MCF 10A (cell line): ENCODE measurements at regions of chr7 and their contacts with region 1.

Region 1: DNA sequence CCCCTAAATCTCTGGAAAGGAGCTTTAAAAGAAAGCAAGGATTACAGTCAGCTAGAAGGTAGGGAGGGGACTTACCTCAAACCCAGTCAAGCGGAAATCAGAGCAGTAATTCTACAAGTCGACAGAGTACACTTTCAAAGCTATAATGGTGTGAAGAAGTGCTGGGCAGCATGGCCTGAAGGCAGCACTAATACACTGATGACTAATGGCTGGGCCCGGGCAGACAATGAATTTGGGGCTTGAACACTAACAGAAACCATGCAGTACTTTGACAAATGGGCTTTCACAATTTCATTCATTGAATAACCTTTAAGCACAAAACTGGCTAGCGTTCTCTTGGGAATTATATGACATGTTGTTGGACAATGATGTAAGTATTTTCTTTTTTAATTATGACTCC is 4.7 kb downstream of the GLI3 start:
- DNase-seq: peak; percentile 95
- H3K4me3 Mint-ChIP-seq: peak overlapping the region; percentile 41
- H3K27ac Mint-ChIP-seq: peak overlapping the region; percentile 49
- H3K4me1 Mint-ChIP-seq: peaks cover 39% of the 10 kb centered on the region
- H3K27me3 Mint-ChIP-seq: no peaks in the 10 kb centered on the region
- CTCF ChIP-seq: no peak

Region 2: DNA sequence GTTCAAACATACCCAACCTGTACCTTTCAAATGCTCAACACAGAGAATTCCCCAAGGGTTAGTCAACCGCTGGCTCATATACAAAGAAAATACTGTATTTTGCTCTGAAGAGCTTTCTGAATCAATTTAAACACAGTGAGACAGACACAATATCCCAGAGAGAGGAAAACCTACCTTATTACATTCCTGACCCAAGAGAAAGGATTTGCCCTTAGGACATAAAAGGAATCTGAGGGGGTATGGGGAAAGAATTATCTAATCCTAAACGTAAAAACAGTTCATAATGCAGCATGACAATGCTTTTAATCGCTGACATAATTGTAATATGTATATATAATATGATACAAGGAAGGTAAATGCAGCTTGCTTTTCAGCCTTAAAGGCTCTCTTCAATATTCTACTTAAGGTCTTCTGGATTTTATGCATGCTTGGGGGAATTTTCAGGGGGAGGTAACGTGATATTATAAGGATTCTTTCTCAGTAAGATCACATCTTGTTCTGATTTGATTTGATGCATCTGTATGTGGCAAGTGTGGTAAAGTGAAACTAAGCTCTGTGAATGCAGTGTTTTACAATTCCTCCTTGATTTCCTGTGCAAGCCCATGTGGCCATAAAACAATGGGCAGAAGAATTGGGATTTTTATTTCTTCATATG is 235.8 kb before region 1 on chr7:
- CTCF ChIA-PET with region 1: interaction called, 4 read pairs
- POLR2A ChIA-PET with region 1: interaction called, 13 read pairs
- intact Hi-C with region 1: no loop called
- DNase-seq: peak; percentile 74
- H3K4me3 Mint-ChIP-seq: peak overlapping the region; percentile 60
- H3K27ac Mint-ChIP-seq: peak overlapping the region; percentile 74
- H3K4me1 Mint-ChIP-seq: peaks cover 48% of the 10 kb centered on the region
- H3K27me3 Mint-ChIP-seq: no peaks in the 10 kb centered on the region
- CTCF ChIP-seq: no peak

Region 3: GRCh38 chr7:42192851-42193461 is 39.3 kb before region 1 on chr7:
- CTCF ChIA-PET with region 1: interaction called, 3 read pairs
- POLR2A ChIA-PET with region 1: interaction called, 71 read pairs
- intact Hi-C with region 1: loop called (anchors 2 kb)
- DNase-seq: peak; percentile 53
- H3K4me3 Mint-ChIP-seq: peak overlapping the region; percentile 57
- H3K27ac Mint-ChIP-seq: peak overlapping the region; percentile 85
- H3K4me1 Mint-ChIP-seq: peaks cover 66% of the 10 kb centered on the region
- H3K27me3 Mint-ChIP-seq: no peaks in the 10 kb centered on the region
- CTCF ChIP-seq: no peak

Region 4: GRCh38 chr7:42198974-42199668 is 33.2 kb before region 1 on chr7:
- CTCF ChIA-PET with region 1: interaction called, 3 read pairs
- POLR2A ChIA-PET with region 1: interaction called, 71 read pairs
- intact Hi-C with region 1: no loop called
- DNase-seq: no peak
- H3K4me3 Mint-ChIP-seq: no peak overlapping the region
- H3K27ac Mint-ChIP-seq: peak overlapping the region; percentile 81
- H3K4me1 Mint-ChIP-seq: peaks cover 38% of the 10 kb centered on the region
- H3K27me3 Mint-ChIP-seq: no peaks in the 10 kb centered on the region
- CTCF ChIP-seq: no peak

Region 5: GRCh38 chr7:42671627-42672026 is 439.4 kb after region 1 on chr7:
- CTCF ChIA-PET with region 1: no interaction called
- POLR2A ChIA-PET with region 1: interaction called, 10 read pairs
- intact Hi-C with region 1: no loop called
- DNase-seq: peak; percentile 95
- H3K4me3 Mint-ChIP-seq: no peak overlapping the region
- H3K27ac Mint-ChIP-seq: peak overlapping the region; percentile 89
- H3K4me1 Mint-ChIP-seq: peaks cover 42% of the 10 kb centered on the region
- H3K27me3 Mint-ChIP-seq: no peaks in the 10 kb centered on the region
- CTCF ChIP-seq: no peak

Region 6: GRCh38 chr7:42677751-42678699 is 445.8 kb after region 1 on chr7:
- CTCF ChIA-PET with region 1: no interaction called
- POLR2A ChIA-PET with region 1: interaction called, 16 read pairs
- intact Hi-C with region 1: no loop called
- DNase-seq: peak; percentile 91
- H3K4me3 Mint-ChIP-seq: peak overlapping the region; percentile 17
- H3K27ac Mint-ChIP-seq: peak overlapping the region; percentile 86
- H3K4me1 Mint-ChIP-seq: peaks cover 36% of the 10 kb centered on the region
- H3K27me3 Mint-ChIP-seq: no peaks in the 10 kb centered on the region
- CTCF ChIP-seq: no peak

Region 7: GRCh38 chr7:42690794-42691639 is 458.7 kb after region 1 on chr7:
- CTCF ChIA-PET with region 1: interaction called, 3 read pairs
- POLR2A ChIA-PET with region 1: interaction called, 10 read pairs
- intact Hi-C with region 1: loop called (anchors 5 kb)
- DNase-seq: peak; percentile 76
- H3K4me3 Mint-ChIP-seq: no peak overlapping the region
- H3K27ac Mint-ChIP-seq: peak overlapping the region; percentile 19
- H3K4me1 Mint-ChIP-seq: no peaks in the 10 kb centered on the region
- H3K27me3 Mint-ChIP-seq: no peaks in the 10 kb centered on the region
- CTCF ChIP-seq: peak; percentile 71